Heart right ventricle (tissue), 16 donors: ENCODE measurements at regions of chr9 and their contacts with region 1.

Region 1: DNA sequence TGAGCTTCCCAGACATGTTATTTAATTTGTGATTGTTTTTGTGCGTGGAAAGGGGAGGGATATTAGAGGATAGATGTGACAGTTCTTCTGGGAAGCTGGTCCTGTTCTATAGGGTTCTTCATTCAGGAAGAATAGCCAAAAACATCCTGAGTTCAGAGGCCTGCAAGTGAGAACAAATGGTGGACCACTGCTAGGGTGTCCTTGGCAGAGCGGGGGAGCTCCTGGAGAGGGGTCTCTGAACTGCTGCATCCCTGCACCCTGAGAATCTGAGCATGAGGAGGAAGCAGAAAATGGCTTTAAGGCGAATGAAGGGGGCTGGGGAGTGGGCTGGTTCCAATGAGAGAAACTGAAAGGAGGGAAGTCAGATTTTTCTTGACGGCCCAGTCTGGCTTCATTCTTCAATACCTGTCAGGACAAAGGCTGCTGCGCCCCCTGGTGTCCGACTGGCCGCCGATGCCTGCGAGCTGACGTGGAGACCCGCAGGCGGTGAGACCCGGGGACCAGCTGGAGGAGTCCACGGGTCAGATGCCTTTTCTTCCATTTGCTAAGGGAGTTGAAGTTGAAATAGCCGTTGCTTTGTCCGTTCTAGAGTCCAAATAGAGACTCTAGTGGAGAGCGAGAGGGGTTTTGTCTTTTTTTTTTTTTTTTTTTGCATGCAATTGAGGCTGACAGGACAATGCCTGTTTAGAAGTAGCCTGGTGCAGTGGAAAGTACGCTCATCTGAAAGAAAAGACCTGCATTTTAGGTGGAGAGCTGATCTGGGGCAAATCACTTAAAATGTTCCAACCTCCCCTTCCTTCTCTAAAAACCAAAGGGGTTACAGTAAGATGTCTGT is 39.5 kb upstream of the NFIB start:
- DNase-seq: peak; percentile 96 to 97
- ATAC-seq: peak; percentile 58 to 82 (median 76)
- H3K4me3 ChIP-seq: peak overlapping the region in 5 of 10 donors; percentile 25 to 44 (median 31)
- H3K27ac ChIP-seq: peak overlapping the region in 9 of 10 donors; percentile 26 to 98 (median 92)
- H3K4me1 ChIP-seq: peaks cover 0 to 75% (median 49%) of the 10 kb centered on the region in 9 donors
- H3K27me3 ChIP-seq: peaks cover 0 to 31% (median 0%) of the 10 kb centered on the region in 7 donors
- CTCF ChIP-seq: peak; percentile 90 to 97 (median 91)

Region 2: GRCh38 chr9:13427587-13427986 is 925.9 kb before region 1 on chr9:
- intact Hi-C with region 1: loop called (anchors 1 to 5 kb)
- DNase-seq: peak in 1 of 2 donors; percentile 48
- ATAC-seq: peak in 7 of 8 donors; percentile 25 to 68 (median 48)
- H3K4me3 ChIP-seq: peak overlapping the region in 4 of 10 donors; percentile 3 to 26 (median 8)
- H3K27ac ChIP-seq: peak overlapping the region in 6 of 10 donors; percentile 25 to 62 (median 52)
- H3K4me1 ChIP-seq: peaks cover 0 to 32% (median 19%) of the 10 kb centered on the region in 9 donors
- H3K27me3 ChIP-seq: no peaks in the 10 kb centered on the region
- CTCF ChIP-seq: peak; percentile 58 to 90 (median 80)

Region 3: GRCh38 chr9:13568841-13569601 is 784.4 kb before region 1 on chr9:
- intact Hi-C with region 1: loop called in 2 of 10 experiments (anchors 2 to 5 kb)
- DNase-seq: peak; percentile 13 to 19
- ATAC-seq: peak; percentile 23 to 63 (median 49)
- H3K4me3 ChIP-seq: peak overlapping the region in 8 of 10 donors; percentile 1 to 47 (median 34)
- H3K27ac ChIP-seq: peak overlapping the region; percentile 59 to 94 (median 84)
- H3K4me1 ChIP-seq: peaks cover 6 to 48% (median 39%) of the 10 kb centered on the region in 9 donors
- H3K27me3 ChIP-seq: no peaks in the 10 kb centered on the region
- CTCF ChIP-seq: no peak

Region 4: DNA sequence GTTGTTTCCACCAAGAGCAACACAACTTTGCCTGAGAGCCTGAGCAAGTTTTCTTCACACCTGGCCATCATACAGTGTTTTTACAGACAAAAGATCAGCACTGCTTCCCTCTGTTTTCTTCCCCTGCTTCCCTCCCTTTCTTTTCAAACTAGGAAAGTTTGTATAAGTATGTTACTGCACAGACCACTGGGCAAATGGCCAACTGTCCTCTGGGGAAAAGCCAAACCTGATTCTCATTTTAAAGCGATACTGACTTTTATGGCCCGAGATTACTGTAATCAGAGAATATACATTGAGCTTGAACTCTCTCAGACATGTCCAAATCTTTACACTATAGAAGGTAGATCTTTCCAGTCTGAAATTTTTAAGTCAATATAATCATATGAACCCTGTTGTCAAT is 454.5 kb before region 1 on chr9:
- intact Hi-C with region 1: loop called in 2 of 10 experiments (anchors 10 kb)
- DNase-seq: peak in 1 of 2 donors; percentile 26
- ATAC-seq: no peak
- H3K4me3 ChIP-seq: no peak overlapping the region
- H3K27ac ChIP-seq: peak overlapping the region in 9 of 10 donors; percentile 37 to 86 (median 70)
- H3K4me1 ChIP-seq: peaks cover 0 to 64% (median 41%) of the 10 kb centered on the region in 9 donors
- H3K27me3 ChIP-seq: no peaks in the 10 kb centered on the region
- CTCF ChIP-seq: no peak

Region 5: DNA sequence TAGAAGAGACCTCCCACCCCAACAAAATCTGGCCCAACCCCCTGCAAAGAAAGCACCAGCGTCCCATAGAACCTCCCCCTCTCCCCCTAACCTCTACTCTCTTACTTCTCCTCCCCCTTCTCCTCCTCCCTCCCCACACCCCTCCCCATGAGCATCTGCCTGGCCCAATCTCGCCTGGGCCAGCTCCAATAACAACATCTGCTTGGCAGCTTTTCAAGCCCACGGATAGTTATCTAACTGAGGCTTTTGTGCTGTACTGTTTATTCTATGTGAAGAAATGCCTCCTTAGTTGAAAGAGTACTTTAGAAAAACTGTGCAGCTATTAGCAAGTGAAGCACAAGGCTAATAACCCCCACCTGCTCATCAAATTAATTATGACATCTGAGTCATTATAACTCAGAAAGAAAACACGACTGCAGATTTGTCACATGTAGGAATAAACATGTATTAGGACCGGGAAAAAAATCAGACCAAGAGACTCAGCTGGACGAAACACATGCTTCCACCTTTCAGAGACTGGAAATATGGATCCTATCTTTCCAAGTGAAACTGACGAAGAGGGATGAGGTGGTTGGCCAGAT is 82.3 kb before region 1 on chr9:
- intact Hi-C with region 1: loop called in 1 of 10 experiments (anchors 5 kb)
- DNase-seq: peak; percentile 71 to 87
- ATAC-seq: peak; percentile 62 to 84 (median 70)
- H3K4me3 ChIP-seq: peak overlapping the region in 3 of 10 donors; percentile 4 to 9 (median 8)
- H3K27ac ChIP-seq: peak overlapping the region in 8 of 10 donors; percentile 0 to 84 (median 34)
- H3K4me1 ChIP-seq: peaks cover 22 to 77% (median 69%) of the 10 kb centered on the region in 9 donors
- H3K27me3 ChIP-seq: no peaks in the 10 kb centered on the region
- CTCF ChIP-seq: no peak

Region 6: GRCh38 chr9:14288433-14288832 is 65.0 kb before region 1 on chr9:
- intact Hi-C with region 1: no loop called
- DNase-seq: no peak
- ATAC-seq: peak in 7 of 8 donors; percentile 38 to 86 (median 70)
- H3K4me3 ChIP-seq: no peak overlapping the region
- H3K27ac ChIP-seq: peak overlapping the region in 2 of 10 donors; percentile 44 to 59
- H3K4me1 ChIP-seq: peaks cover 0 to 83% (median 48%) of the 10 kb centered on the region in 9 donors
- H3K27me3 ChIP-seq: no peaks in the 10 kb centered on the region
- CTCF ChIP-seq: no peak